WTC11 (cell line): ENCODE measurements at regions of chr18 and their contacts with region 1.

Region 1: GRCh38 chr18:31722369-31722957 is 38.1 kb upstream of the B4GALT6 start:
- DNase-seq: peak; percentile 91
- ATAC-seq: peak; percentile 97
- H3K4me3 Mint-ChIP-seq: no peak overlapping the region
- H3K27ac Mint-ChIP-seq: peak overlapping the region; percentile 18
- H3K4me1 Mint-ChIP-seq: peaks cover 9% of the 10 kb centered on the region
- H3K27me3 Mint-ChIP-seq: peaks cover 6% of the 10 kb centered on the region
- CTCF ChIP-seq: peak; percentile 90

Region 2: DNA sequence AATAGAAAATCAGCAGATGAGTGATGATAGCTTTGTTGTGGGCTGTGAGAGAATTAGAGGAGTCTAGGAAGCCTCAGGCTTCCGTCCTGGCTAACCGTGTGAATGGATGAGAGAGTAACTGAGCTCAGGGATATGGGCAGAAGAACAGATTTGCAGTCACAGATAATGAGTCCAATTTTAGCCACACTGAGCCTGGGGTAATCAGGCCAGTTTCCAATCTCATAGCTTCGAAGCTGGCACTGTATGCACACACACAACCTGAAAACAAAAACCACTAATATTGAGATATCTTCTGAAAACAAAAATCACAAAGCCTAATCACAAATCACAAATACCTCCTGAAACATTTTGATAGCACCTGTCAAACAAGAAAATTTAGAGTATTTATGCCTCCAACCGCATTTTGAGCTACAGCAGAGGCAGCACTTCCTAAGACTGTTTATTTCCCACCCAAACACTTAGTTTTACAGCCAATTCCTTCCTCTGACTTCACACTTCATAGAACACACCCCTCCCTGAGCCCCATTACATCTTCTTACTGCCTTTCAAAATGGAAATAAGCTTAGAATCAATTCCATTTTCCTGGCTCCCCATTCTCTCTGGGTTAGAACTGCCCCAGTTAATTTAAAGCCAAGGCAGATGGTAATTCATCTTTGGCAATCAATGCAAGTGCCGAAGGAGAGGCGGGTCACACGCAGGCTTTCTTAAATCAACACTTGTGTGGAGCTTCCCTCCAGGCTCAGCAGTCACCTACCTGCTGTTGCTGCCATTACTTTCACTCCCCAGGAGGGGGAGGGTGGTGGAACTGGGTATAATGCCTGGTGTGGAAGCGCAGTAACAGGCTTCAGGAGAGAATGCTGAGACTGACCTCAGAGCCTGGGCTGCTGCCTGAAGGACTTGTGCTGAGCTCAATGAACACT is 111.9 kb before region 1 on chr18:
- CTCF ChIA-PET with region 1: interaction called, 35 read pairs
- POLR2A ChIA-PET with region 1: no interaction called
- DNase-seq: peak; percentile 63
- ATAC-seq: peak; percentile 98
- H3K4me3 Mint-ChIP-seq: no peak overlapping the region
- H3K27ac Mint-ChIP-seq: no peak overlapping the region
- H3K4me1 Mint-ChIP-seq: peaks cover 31% of the 10 kb centered on the region
- H3K27me3 Mint-ChIP-seq: no peaks in the 10 kb centered on the region
- CTCF ChIP-seq: peak; percentile 46; the same call in 1 of the 2 replicates